ENCODE measurements at regions of chr4 and their contacts with region 1.

Region 1: GRCh38 chr4:109169160-109169559 is 133.3 kb downstream of the COL25A1 start:
- DNase-seq: no peak
- H3K27ac ChIP-seq: no peak overlapping the region
- CTCF ChIP-seq: no peak

Region 2: DNA sequence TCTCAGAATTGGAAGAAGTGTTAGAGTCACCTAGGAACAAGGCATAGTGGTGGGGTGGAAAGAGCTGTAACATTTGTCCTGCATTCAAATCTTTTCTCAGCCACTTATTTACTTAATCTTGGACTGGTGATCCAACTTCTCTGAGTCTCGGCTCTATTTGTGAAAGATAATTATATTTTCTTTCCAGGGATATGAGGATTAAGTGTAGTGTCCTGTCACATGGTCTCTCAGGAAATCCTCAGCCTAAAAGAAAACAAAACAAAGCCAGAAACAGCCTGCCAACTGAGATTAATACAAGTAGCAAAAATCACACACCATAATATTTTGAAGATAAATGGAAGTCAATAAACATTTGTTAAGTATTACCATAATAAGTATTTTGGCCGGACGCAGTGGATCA is 373.0 kb before region 1 on chr4:
- CTCF ChIA-PET with region 1: interaction called, 10 read pairs
- POLR2A ChIA-PET with region 1: no interaction called
- DNase-seq: no peak
- H3K27ac ChIP-seq: no peak overlapping the region
- CTCF ChIP-seq: no peak

Region 3: DNA sequence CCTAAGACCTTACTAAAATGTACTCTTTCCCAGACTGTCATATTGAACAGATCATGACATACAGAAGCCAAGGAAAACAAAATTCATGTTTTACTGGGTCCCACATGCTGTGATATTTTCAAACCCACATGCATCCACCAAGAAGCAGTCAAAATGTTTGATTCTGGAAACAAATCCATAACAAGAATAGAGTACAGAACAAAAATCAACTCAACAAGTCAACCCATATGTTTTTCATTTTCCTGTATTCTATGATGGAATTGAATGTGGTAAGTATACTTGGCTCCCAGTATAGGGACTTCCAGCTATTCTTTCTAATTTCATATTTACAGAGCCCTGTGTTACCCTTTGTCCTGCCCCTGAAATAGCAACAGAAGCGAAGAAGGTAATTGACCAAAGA is 26.5 kb after region 1 on chr4:
- CTCF ChIA-PET with region 1: no interaction called
- POLR2A ChIA-PET with region 1: no interaction called
- DNase-seq: no peak
- H3K27ac ChIP-seq: no peak overlapping the region
- CTCF ChIP-seq: no peak

Region 4: DNA sequence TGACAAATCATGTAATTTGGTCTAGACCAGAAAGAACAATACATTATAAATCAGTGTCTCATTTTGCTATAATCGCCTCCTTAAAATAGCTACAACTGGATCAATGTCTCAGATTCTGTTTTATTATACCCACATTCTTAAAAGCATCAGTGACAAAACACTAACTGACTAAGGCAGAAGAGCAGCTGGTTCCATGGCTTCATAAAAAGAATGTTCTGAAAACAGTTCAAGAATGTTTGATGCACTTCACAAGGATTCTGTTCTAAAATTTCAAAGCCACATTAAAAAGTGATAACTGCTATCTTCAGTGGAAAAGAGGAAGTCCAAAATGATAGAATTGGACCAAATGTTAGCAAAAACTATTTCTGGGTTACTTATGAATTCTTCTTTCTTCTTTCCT is 63.5 kb after region 1 on chr4:
- CTCF ChIA-PET with region 1: no interaction called
- POLR2A ChIA-PET with region 1: no interaction called
- DNase-seq: no peak
- H3K27ac ChIP-seq: no peak overlapping the region
- CTCF ChIP-seq: no peak

Measured in RWPE1 (cell line).